H1 (cell line): ENCODE measurements at regions of chr11 and their contacts with region 1.

Region 1: DNA sequence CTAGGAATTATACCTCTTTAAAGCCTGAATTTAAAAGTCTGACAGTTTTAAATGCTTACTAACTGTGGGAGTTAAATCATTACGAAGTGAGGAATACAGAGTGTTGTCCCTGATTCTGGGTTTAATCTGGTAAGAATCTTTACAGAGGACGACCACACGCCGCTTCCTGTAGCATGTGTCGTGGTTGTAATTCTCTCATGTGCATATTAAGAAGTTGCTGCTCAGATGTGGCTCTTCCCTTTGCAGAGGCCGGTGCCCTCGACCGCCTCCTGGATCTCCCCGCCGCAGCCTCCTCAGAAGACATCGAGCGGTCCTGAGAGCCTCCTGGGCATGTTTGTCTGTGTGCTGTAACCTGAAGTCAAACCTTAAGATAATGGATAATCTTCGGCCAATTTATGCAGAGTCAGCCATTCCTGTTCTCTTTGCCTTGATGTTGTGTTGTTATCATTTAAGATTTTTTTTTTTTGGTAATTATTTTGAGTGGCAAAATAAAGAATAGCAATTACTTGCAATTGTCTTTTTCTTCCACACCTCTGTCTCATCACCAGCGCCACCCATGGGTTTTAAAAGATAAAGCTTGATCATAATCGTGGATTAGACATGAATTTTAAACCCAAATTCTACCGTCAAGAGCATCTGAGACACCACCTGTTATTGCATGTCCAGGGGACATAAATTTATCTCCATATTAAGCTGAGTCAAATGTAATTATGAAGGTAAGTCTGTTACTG is 6.5 kb downstream of the GAL start:
- DNase-seq: peak in 1 of 2 experiments; percentile 34
- H3K4me3 ChIP-seq: no peak overlapping the region
- H3K27ac ChIP-seq: no peak overlapping the region
- H3K4me1 ChIP-seq: peaks cover 5 to 26% (median 11%) of the 10 kb centered on the region in 4 experiments
- H3K27me3 ChIP-seq: peaks cover 0 to 7% (median 1%) of the 10 kb centered on the region in 4 experiments; a peak in 4 of 7 replicates
- CTCF ChIP-seq: no peak
- EP300 ChIP-seq: no peak
- POLR2A ChIP-seq: no peak
- RAD21 ChIP-seq: peak in 1 of 2 experiments; percentile 24; a peak in 1 of 4 replicates

Region 2: DNA sequence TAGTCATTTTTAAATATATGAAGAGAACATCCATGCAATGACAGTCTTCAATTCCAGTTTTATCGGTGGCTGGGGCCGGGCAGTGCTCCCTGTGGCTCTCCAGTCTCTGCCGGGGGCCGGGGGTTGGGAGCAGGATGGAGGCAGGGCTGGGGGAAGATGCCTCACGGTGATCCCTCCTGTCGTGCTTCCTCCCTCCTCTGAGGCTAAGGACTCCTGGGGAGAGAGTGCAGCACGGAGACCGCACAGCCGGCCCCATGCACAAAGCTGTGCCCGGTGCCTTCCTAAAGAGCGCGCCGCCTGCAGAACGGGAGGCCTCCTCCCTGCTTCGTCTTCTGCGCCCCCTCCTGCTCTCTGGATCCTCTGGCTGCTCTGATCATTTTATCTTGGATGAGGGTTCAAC is 14.1 kb after region 1 on chr11:
- CTCF ChIA-PET with region 1: interaction called, 13 read pairs
- POLR2A ChIA-PET with region 1: interaction called, 13 read pairs
- DNase-seq: peak in 1 of 2 experiments; percentile 34
- H3K4me3 ChIP-seq: peak overlapping the region in 1 of 4 experiments; percentile 41; a peak in 4 of 8 replicates
- H3K27ac ChIP-seq: no peak overlapping the region
- H3K4me1 ChIP-seq: peaks cover 6 to 14% (median 9%) of the 10 kb centered on the region in 4 experiments
- H3K27me3 ChIP-seq: no peaks in the 10 kb centered on the region; a peak in 1 of 7 replicates
- CTCF ChIP-seq: peak; percentile 13 to 32 (median 18); a peak in 3 of 4 replicates
- EP300 ChIP-seq: no peak; a peak in 1 of 3 replicates
- POLR2A ChIP-seq: no peak
- RAD21 ChIP-seq: peak in 1 of 2 experiments; percentile 9; a peak in 1 of 4 replicates